ENCODE measurements at regions of chr3 and their contacts with region 1.

Region 1: DNA sequence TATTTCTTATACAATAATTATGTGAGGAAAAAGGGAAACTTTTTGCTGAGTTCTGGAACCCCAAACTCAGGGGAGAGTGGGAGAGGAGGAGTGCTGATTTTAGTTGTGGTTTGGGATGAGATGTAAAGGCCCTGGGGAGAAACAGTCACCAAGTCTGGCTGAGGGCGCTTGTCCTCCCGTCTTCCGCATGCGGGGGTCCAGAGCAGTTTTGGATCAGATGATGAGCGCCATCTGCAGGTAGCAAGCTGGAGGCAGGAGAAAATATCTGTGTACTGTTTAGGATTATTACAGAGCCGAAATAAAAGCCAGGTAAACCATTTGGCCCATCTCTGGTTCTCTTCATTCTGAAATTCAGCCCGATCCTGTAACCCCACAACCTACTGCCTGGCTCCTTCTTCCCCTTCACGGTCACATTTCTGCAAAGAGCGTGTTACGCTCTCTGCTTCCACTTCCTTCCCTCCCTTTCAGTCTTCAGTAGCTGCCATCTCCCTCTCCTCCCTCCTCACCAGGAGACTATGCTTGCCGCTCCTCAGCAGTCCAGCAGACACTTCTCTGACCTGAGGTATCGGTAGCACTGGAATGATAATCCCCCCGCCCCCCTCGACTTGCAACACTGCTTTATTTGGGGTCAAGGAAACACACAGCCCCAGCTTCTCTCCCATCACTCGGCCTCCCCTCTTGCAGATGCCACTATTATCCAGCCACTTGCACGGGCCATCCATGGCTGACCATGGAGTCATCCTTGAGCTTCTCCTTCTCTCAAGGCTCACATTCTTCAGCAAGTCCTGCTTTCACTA is 1.4 kb upstream of the PARP14 start:
- DNase-seq: no peak
- H3K4me3 ChIP-seq: peak overlapping the region; percentile 78 to 84
- H3K27ac ChIP-seq: peak overlapping the region; percentile 98
- H3K4me1 ChIP-seq: peaks cover 30% of the 10 kb centered on the region
- H3K27me3 ChIP-seq: no peaks in the 10 kb centered on the region
- CTCF ChIP-seq: peak; percentile 57 to 91 (median 73)
- POLR2A ChIP-seq: no peak

Region 2: GRCh38 chr3:122342803-122343202 is 336.5 kb before region 1 on chr3:
- intact Hi-C with region 1: no loop called
- DNase-seq: no peak
- H3K4me3 ChIP-seq: no peak overlapping the region
- H3K27ac ChIP-seq: no peak overlapping the region
- H3K4me1 ChIP-seq: no peaks in the 10 kb centered on the region
- H3K27me3 ChIP-seq: no peaks in the 10 kb centered on the region
- CTCF ChIP-seq: no peak
- POLR2A ChIP-seq: no peak

Region 3: GRCh38 chr3:122383771-122384697 is 295.2 kb before region 1 on chr3 and contains the start of gene FAM162A:
- intact Hi-C with region 1: loop called (anchors 5 kb)
- DNase-seq: peak in 1 of 2 donors; percentile 93
- H3K4me3 ChIP-seq: peak within 1 kb of the TSS; percentile 63 to 72
- H3K27ac ChIP-seq: peak within 1 kb of the TSS; percentile 83
- H3K4me1 ChIP-seq: peaks cover 31% of the 10 kb centered on the region
- H3K27me3 ChIP-seq: no peaks in the 10 kb centered on the region
- CTCF ChIP-seq: peak in 2 of 3 experiments; percentile 45 to 60
- POLR2A ChIP-seq: peak in 1 of 2 donors; percentile 80
- total RNA-seq, gene FAM162A: 29.7 TPM

Region 4: DNA sequence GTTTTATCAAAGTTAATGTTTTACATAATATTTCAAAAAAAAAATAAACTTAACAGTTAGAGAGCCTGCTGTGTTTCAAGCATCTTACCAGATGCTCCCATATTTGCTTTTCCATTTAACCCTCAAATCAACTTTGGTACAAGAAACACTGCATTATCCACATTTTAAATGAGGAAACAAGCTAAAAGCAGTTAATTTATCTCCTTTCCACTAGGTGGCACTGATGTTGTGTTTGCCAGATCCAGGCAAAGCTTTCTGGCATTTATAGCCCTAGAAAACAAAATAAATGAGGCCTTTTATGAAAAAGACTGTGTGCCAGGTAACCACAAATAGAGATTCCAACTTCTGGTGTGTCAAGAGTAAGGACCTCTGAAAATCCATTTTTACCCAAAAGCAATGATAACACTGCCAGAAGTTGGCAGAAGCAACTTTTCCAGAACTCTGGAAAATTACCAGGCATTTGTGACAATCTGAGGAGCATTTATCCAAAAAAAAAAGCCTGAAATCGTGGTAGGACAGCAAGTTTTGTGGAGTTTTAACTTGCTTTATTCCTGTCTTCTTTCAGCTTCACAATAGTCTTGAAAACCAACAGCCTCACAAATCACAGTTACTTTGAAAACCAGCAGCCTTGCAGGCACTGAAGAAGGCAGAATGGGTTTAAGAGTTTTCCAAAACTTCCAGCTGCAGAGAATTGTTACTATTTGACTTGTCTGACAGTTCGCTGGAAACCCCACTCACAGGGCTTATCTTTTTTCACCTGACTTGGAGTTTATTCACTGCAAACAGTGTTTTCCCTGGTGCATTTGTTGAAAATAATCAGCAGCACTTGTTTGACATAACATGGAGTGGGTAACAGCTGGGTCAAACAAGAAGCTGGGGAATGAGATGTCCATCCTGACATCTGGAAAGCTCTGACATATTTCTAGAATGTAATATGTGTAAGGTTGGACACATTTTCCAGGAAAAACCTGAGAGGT is 286.1 kb before region 1 on chr3:
- intact Hi-C with region 1: loop called (anchors 5 kb)
- DNase-seq: no peak
- H3K4me3 ChIP-seq: no peak overlapping the region
- H3K27ac ChIP-seq: no peak overlapping the region
- H3K4me1 ChIP-seq: peaks cover 9% of the 10 kb centered on the region
- H3K27me3 ChIP-seq: no peaks in the 10 kb centered on the region
- CTCF ChIP-seq: peak in 2 of 3 experiments; percentile 58 to 69
- POLR2A ChIP-seq: no peak

Region 5: GRCh38 chr3:122564155-122564912 is 114.9 kb before region 1 on chr3 and contains the starts of genes DTX3L and PARP9:
- intact Hi-C with region 1: loop called (anchors 2 kb)
- DNase-seq: no peak
- H3K4me3 ChIP-seq: peak within 1 kb of the TSS; percentile 90 to 98
- H3K27ac ChIP-seq: peak within 1 kb of the TSS; percentile 97
- H3K4me1 ChIP-seq: peaks cover 29% of the 10 kb centered on the region
- H3K27me3 ChIP-seq: no peaks in the 10 kb centered on the region
- CTCF ChIP-seq: no peak
- POLR2A ChIP-seq: peak in 1 of 2 donors; percentile 7
- total RNA-seq, gene DTX3L: 17.7 TPM
- total RNA-seq, gene PARP9: 19.4 TPM

Measured in vagina (tissue), 2 donors.